ENCODE measurements at regions of chr1 and their contacts with region 1.

Region 1: GRCh38 chr1:9249534-9250410 is 15.2 kb downstream of the H6PD start:
- DNase-seq: peak; percentile 57 to 71 (median 69)
- H3K4me3 ChIP-seq: no peak overlapping the region
- H3K27ac ChIP-seq: peak overlapping the region; percentile 31 to 69
- H3K4me1 ChIP-seq: peaks cover 44% of the 10 kb centered on the region
- H3K27me3 ChIP-seq: no peaks in the 10 kb centered on the region
- CTCF ChIP-seq: peak in 2 of 3 donors; percentile 38 to 55
- EP300 ChIP-seq: no peak
- POLR2A ChIP-seq: no peak

Region 2: DNA sequence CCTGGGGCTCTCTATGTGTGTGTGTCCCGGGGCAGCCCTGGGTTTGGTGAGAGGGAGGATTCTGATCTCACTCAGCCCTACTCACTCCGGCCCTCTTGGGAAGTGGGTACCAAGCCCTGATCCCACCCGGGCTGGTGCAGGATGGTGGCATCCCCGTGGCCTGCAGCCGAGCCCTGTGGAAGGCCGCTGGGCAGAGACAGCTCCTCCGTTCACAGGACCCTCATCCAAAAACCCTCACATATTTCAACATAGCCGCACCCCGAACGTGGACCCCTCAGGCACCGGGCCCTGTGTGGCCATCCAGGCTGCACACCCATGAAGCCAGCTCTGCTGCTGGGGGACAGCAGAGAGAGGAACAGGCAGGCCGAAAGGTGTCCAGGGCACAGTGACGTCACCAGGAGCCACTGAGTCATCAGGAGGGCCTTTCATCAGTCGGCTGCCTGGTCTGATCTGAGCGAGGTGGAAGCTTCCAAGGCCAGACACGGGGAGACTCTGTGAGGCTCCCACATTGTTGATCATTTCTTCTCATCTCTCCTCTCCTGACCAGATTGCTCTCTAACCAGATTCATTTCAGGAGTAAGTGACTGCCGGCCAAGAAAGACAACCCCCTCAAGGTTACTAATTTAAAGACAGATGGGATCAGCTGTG is 104.6 kb before region 1 on chr1:
- intact Hi-C with region 1: loop called in 1 of 4 experiments (anchors 5 kb)
- DNase-seq: peak; percentile 48 to 70 (median 63)
- H3K4me3 ChIP-seq: no peak overlapping the region
- H3K27ac ChIP-seq: no peak overlapping the region
- H3K4me1 ChIP-seq: peaks cover 4% of the 10 kb centered on the region
- H3K27me3 ChIP-seq: no peaks in the 10 kb centered on the region
- CTCF ChIP-seq: no peak
- EP300 ChIP-seq: no peak
- POLR2A ChIP-seq: no peak

Region 3: DNA sequence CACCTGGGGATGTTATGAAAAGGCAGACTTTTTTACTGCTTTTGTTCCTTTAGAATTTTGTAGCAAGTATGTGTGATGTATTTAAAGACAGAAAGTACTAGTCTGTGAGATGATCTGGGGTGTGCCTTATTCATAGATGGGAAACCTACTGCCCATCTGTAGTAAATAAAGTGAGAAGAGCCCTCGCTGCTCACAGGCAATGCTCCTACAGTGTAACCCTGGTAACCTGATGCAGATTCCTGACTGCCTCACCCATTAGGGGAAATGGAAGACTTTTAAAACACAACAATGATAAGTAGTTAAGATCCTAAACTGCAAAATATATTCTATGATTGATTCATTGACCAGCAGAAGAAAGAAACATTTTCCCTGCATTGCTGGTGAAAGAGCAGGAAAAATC is 319.5 kb after region 1 on chr1:
- intact Hi-C with region 1: no loop called
- DNase-seq: no peak
- H3K4me3 ChIP-seq: no peak overlapping the region
- H3K27ac ChIP-seq: no peak overlapping the region
- H3K4me1 ChIP-seq: no peaks in the 10 kb centered on the region
- H3K27me3 ChIP-seq: no peaks in the 10 kb centered on the region
- CTCF ChIP-seq: no peak
- EP300 ChIP-seq: no peak
- POLR2A ChIP-seq: no peak

Measured in ovary (tissue), 10 donors.